ENCODE measurements at regions of chr12 and their contacts with region 1.

Region 1: DNA sequence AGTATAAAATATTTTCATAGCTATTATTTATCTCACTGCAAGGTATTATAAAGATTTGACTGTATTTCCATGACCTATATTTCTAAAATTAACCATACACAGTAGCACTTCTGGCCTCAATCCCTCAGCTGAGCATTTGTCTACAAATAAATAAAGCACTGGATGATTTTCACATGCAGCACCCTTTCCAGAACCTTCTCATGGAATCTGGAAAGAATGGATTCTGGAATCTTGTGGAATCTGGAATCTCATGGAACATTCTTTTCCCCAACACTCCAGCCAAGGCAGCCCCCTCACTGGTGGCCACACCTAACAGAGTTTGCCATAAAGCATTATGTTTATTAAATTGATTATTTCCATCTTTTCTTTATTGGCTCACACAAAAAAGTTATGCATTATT is 199.2 kb downstream of the MSRB3 start:
- DNase-seq: no peak
- ATAC-seq: no peak
- H3K4me3 ChIP-seq: no peak overlapping the region
- H3K27ac ChIP-seq: no peak overlapping the region
- H3K4me1 ChIP-seq: no peaks in the 10 kb centered on the region
- H3K27me3 ChIP-seq: no peaks in the 10 kb centered on the region
- CTCF ChIP-seq: no peak
- EP300 ChIP-seq: no peak
- POLR2A ChIP-seq: no peak
- RAD21 ChIP-seq: no peak

Region 2: GRCh38 chr12:65464930-65465329 is 12.8 kb before region 1 on chr12:
- CTCF ChIA-PET with region 1: no interaction called
- POLR2A ChIA-PET with region 1: no interaction called
- in situ Hi-C with region 1: no loop called
- intact Hi-C with region 1: no loop called
- DNase-seq: no peak
- ATAC-seq: no peak
- H3K4me3 ChIP-seq: no peak overlapping the region
- H3K27ac ChIP-seq: no peak overlapping the region
- H3K4me1 ChIP-seq: no peaks in the 10 kb centered on the region
- H3K27me3 ChIP-seq: no peaks in the 10 kb centered on the region
- CTCF ChIP-seq: no peak
- EP300 ChIP-seq: no peak
- POLR2A ChIP-seq: no peak
- RAD21 ChIP-seq: no peak

Region 3: DNA sequence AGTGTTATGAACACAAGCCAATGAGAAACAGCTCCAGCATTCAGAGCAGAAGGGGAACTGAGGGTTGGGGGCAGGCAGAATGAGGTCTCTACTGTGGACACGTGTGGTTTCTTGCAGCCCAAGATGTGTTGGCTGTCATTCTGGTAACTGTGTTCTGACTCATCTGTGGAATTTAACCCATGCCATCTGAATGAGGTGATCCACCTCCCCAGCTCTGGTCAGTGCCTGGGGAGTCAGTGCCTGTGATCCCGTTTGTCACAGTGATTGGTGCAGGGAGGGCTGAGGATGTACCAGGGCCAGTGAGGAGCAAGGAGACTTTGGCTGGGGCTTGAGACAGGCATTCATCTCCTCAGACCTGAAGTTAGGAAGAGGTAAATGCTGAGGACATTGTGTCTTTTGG is 17.5 kb after region 1 on chr12:
- CTCF ChIA-PET with region 1: no interaction called
- POLR2A ChIA-PET with region 1: no interaction called
- in situ Hi-C with region 1: no loop called
- intact Hi-C with region 1: no loop called
- DNase-seq: peak; percentile 7
- ATAC-seq: peak; percentile 60; the same call in 2 of the 3 replicates
- H3K4me3 ChIP-seq: no peak overlapping the region
- H3K27ac ChIP-seq: no peak overlapping the region
- H3K4me1 ChIP-seq: peaks cover 31% of the 10 kb centered on the region
- H3K27me3 ChIP-seq: no peaks in the 10 kb centered on the region
- CTCF ChIP-seq: no peak
- EP300 ChIP-seq: no peak
- POLR2A ChIP-seq: no peak
- RAD21 ChIP-seq: no peak

Region 4: DNA sequence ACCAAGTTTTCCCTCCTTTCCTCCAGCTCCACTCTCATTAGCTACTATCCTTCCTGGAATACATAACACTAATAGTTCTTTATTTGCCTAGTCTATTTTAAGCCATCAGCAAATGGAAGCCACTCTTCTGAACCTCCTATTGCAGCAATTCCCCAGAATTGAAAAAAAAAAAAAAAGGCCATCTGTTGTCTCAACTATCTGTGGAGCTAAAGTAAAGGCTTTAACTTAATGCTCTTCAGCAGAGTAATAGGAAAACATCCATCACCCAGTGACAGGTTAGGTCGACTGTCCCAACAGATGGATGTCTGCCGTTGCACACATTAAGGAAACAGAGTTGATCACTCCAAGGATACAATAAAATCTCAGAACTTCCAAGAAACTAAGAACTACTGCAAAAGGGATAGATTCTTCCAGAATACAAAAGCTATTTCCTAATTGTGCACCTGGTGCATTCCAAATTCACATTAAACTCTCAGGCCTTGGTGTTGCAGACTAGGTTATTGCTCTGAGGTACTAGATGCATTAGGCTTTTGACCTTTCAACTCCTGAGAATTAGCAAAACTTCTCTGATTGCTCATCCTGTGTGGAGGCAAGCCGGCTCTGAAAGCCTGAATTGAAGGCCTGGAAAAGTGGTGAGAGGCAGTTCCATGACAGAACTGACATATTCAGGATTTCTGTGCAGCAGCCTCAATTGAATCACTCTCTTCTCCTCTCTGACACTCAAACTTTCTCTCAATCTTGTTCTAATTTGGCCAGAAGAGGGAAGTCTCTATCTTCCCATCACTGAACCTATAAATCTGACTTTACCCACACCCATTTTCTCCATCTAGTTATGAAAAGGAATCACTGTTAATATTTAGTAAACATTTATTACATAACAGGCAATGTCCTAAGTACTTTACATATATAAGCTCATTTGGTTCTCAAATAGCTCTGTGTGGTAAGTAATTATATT is 108.2 kb after region 1 on chr12:
- CTCF ChIA-PET with region 1: no interaction called
- POLR2A ChIA-PET with region 1: no interaction called
- in situ Hi-C with region 1: no loop called
- intact Hi-C with region 1: no loop called
- DNase-seq: no peak
- ATAC-seq: no peak
- H3K4me3 ChIP-seq: no peak overlapping the region
- H3K27ac ChIP-seq: no peak overlapping the region
- H3K4me1 ChIP-seq: no peaks in the 10 kb centered on the region
- H3K27me3 ChIP-seq: no peaks in the 10 kb centered on the region; a peak in 2 of 5 replicates
- CTCF ChIP-seq: no peak
- EP300 ChIP-seq: no peak
- POLR2A ChIP-seq: no peak
- RAD21 ChIP-seq: no peak

Region 5: GRCh38 chr12:66491853-66492252 is 1014.1 kb after region 1 on chr12:
- CTCF ChIA-PET with region 1: no interaction called
- POLR2A ChIA-PET with region 1: no interaction called
- in situ Hi-C with region 1: no loop called
- intact Hi-C with region 1: loop called (anchors 5 kb)
- DNase-seq: no peak
- ATAC-seq: no peak
- H3K4me3 ChIP-seq: no peak overlapping the region
- H3K27ac ChIP-seq: no peak overlapping the region
- H3K4me1 ChIP-seq: no peaks in the 10 kb centered on the region
- H3K27me3 ChIP-seq: no peaks in the 10 kb centered on the region
- CTCF ChIP-seq: no peak
- EP300 ChIP-seq: no peak
- POLR2A ChIP-seq: no peak
- RAD21 ChIP-seq: no peak